Heart right ventricle (tissue), 16 donors: ENCODE measurements at regions of chr9 and their contacts with region 1.

Region 1: GRCh38 chr9:102101723-102102122 is 363.3 kb upstream of the GRIN3A start:
- DNase-seq: no peak
- ATAC-seq: no peak
- H3K4me3 ChIP-seq: no peak overlapping the region
- H3K27ac ChIP-seq: no peak overlapping the region
- H3K4me1 ChIP-seq: no peaks in the 10 kb centered on the region
- H3K27me3 ChIP-seq: no peaks in the 10 kb centered on the region
- CTCF ChIP-seq: no peak

Region 2: DNA sequence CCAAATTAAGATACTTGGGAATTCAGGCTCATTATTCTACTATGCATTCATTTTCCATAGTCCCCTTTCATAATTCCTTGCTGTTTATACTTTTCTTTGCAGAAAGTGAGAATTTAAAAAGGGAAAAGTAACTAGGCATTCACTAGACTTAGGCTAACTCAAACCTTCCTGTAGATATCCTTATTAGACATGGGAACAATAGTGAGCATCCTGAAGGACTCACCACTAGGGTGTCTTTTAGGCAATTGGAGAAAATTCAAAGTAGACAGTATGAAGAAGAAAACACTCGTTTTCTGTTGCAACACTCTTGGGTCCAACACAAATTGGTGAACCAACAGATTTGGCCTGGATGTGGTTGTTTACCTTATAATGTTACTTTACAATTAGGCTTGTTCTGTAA is 150.1 kb before region 1 on chr9:
- intact Hi-C with region 1: loop called in 1 of 10 experiments (anchors 10 kb)
- DNase-seq: no peak
- ATAC-seq: no peak
- H3K4me3 ChIP-seq: no peak overlapping the region
- H3K27ac ChIP-seq: no peak overlapping the region
- H3K4me1 ChIP-seq: no peaks in the 10 kb centered on the region
- H3K27me3 ChIP-seq: no peaks in the 10 kb centered on the region
- CTCF ChIP-seq: no peak